ENCODE measurements at regions of chr10 and their contacts with region 1.

Region 1: DNA sequence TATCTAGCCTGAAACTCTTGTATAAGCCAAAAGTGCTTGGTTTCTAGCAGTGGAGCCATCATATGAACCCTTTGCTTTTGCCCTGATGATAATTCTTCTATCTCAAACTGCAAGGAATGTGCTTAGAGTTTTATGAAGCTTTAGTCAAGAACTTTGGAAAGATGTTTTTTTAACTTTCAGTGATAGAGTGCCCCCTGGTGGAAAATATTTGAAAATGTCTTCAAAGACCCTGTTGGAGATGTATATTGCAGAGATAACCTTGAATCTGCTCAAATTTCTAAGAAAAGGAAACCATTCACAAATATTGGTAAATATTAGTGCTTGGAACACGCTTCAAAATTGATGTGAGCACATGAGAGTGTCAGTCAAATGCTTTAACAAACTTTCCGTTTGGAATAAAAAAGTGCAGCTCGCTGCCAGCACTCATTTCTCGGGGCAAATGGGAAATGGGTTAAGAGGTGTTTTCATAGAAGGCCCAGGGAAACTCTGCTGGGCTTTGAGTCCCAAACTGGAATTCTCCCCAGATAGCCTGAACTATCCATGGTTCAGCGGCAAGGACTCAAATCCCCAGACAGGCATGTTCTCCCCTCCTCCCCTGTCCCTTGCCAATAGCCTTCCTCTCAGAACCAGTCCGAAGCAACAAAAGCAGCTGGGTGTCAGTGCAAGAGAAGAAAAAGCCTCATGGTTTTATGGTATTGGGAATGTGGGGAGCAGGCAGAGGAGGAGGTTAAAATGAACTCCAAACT is 129.3 kb downstream of the MYOF start:
- DNase-seq: no peak
- H3K4me3 Mint-ChIP-seq: no peak overlapping the region
- H3K27ac Mint-ChIP-seq: no peak overlapping the region
- H3K4me1 Mint-ChIP-seq: peaks cover 2% of the 10 kb centered on the region
- H3K27me3 Mint-ChIP-seq: peaks cover 14% of the 10 kb centered on the region

Region 2: DNA sequence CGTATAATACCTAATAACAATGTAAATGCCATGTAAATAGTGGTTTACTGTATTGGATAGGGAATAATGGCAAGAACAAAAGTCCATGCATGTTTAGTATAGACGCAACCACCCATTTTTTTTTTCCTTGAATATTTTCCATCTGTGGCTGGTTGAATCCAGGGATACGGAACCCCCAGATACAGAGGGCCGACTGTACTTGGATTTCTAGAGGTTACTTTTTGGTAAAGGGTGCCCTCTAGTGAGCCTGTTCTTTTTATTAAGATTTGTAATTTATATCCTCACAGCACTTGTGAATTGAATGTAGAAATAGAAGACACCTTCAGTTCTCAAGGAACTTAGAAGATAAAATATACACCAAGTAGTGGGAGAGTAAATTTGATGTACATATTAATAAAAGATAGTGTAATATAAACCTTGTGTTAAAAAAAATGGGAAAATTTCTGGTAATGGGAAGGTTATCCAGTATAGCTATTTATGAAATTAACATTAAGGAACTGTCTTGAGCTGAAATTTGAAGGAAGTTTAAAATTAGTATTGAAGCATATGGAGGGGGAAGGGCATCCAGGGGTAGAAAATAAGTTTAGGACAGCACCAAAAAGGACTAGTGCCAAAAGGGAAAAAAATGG is 472.5 kb before region 1 on chr10:
- CTCF ChIA-PET with region 1: interaction called, 3 read pairs
- intact Hi-C with region 1: loop called (anchors 1 kb)
- DNase-seq: no peak
- H3K4me3 Mint-ChIP-seq: no peak overlapping the region
- H3K27ac Mint-ChIP-seq: no peak overlapping the region
- H3K4me1 Mint-ChIP-seq: peaks cover 18% of the 10 kb centered on the region
- H3K27me3 Mint-ChIP-seq: no peaks in the 10 kb centered on the region

Region 3: DNA sequence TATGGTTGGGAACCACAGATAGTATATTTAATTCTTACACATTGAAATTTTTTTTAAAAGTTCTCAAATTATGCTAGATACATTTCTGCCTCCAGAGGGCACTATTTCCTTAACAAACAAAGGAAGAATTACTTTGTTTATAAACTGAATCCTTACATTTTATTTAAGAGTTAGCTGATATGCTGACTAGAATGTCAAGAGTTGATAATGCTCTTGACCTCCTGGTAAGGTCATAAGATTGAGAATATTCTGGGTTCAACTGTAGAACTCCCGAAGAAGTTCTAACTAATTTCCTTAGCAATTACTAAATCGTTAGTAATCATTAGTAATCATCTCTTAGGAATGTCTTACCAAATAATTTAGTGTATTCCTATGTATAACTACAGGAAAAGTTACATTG is 387.5 kb before region 1 on chr10:
- CTCF ChIA-PET with region 1: interaction called, 3 read pairs
- intact Hi-C with region 1: loop called (anchors 1 kb)
- DNase-seq: no peak
- H3K4me3 Mint-ChIP-seq: no peak overlapping the region
- H3K27ac Mint-ChIP-seq: no peak overlapping the region
- H3K4me1 Mint-ChIP-seq: no peaks in the 10 kb centered on the region
- H3K27me3 Mint-ChIP-seq: no peaks in the 10 kb centered on the region

Region 4: GRCh38 chr10:93062514-93063143 is 290.2 kb before region 1 on chr10:
- CTCF ChIA-PET with region 1: interaction called, 3 read pairs
- intact Hi-C with region 1: loop called (anchors 5 kb)
- DNase-seq: peak; percentile 64
- H3K4me3 Mint-ChIP-seq: peak overlapping the region; percentile 66
- H3K27ac Mint-ChIP-seq: no peak overlapping the region
- H3K4me1 Mint-ChIP-seq: peaks cover 22% of the 10 kb centered on the region
- H3K27me3 Mint-ChIP-seq: peaks cover 55% of the 10 kb centered on the region

Region 5: DNA sequence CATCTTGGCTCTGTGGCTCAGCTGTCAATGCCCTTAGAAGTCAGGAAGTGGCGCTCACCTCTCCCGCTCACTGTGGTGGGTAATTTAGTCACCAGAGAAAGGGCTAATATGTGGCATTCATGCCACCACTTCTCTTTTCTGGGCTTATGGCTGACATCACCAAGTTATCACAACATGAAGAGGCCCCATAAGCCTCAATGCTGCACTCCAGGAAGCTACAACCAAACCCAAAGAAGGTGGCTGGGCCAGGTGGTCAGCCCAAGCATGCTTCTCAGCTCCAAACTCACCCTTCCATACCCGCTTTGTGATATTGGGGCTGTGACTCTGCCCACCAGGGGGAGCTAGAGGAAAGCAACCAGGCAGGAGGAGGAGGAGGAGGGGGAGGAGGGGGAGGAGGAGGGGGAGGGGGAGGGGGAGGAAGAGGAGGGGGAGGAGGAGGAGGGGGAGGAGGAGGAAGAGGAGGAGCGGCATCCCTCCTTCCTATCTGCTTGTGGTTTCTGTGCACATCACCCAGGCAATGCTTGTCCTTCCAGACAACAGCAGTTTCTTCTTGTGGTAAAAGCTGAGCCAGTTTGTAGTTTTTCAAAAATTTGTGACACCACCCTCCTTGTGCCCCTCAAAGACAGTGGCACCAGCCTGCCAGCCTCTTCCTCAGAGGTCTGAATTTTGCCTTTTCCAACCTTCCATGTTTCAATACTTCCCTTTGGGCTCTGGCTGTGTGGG is 237.0 kb before region 1 on chr10:
- CTCF ChIA-PET with region 1: interaction called, 7 read pairs
- intact Hi-C with region 1: loop called (anchors 1 kb)
- DNase-seq: peak; percentile 86
- H3K4me3 Mint-ChIP-seq: no peak overlapping the region
- H3K27ac Mint-ChIP-seq: no peak overlapping the region
- H3K4me1 Mint-ChIP-seq: peaks cover 11% of the 10 kb centered on the region
- H3K27me3 Mint-ChIP-seq: no peaks in the 10 kb centered on the region